ENCODE measurements at regions of chr22 and their contacts with region 1.

Region 1: GRCh38 chr22:31977141-31977841 is 33.0 kb downstream of the YWHAH start:
- DNase-seq: peak; percentile 55 to 83 (median 76)
- ATAC-seq: peak; percentile 95
- H3K4me3 ChIP-seq: no peak overlapping the region
- H3K4me3 Mint-ChIP-seq: no peak overlapping the region
- H3K27ac ChIP-seq: no peak overlapping the region
- H3K27ac Mint-ChIP-seq: no peak overlapping the region
- H3K4me1 ChIP-seq: no peaks in the 10 kb centered on the region
- H3K4me1 Mint-ChIP-seq: no peaks in the 10 kb centered on the region
- H3K27me3 ChIP-seq: no peaks in the 10 kb centered on the region
- H3K27me3 Mint-ChIP-seq: no peaks in the 10 kb centered on the region
- CTCF ChIP-seq: peak; percentile 62

Region 2: GRCh38 chr22:31935966-31936635 is 41.2 kb before region 1 on chr22:
- CTCF ChIA-PET with region 1: no interaction called
- POLR2A ChIA-PET with region 1: no interaction called
- intact Hi-C with region 1: no loop called
- DNase-seq: no peak
- ATAC-seq: no peak
- H3K4me3 ChIP-seq: no peak overlapping the region
- H3K4me3 Mint-ChIP-seq: no peak overlapping the region
- H3K27ac ChIP-seq: no peak overlapping the region
- H3K27ac Mint-ChIP-seq: no peak overlapping the region
- H3K4me1 ChIP-seq: no peaks in the 10 kb centered on the region
- H3K4me1 Mint-ChIP-seq: no peaks in the 10 kb centered on the region
- H3K27me3 ChIP-seq: no peaks in the 10 kb centered on the region
- H3K27me3 Mint-ChIP-seq: no peaks in the 10 kb centered on the region
- CTCF ChIP-seq: no peak

Region 3: GRCh38 chr22:32202539-32203180 is 225.4 kb after region 1 on chr22:
- CTCF ChIA-PET with region 1: no interaction called
- POLR2A ChIA-PET with region 1: no interaction called
- intact Hi-C with region 1: loop called in 1 of 2 experiments (anchors 2 kb)
- DNase-seq: peak in 3 of 9 experiments; percentile 29 to 45 (median 33)
- ATAC-seq: peak; percentile 35
- H3K4me3 ChIP-seq: peak overlapping the region; percentile 35 to 50
- H3K4me3 Mint-ChIP-seq: peak overlapping the region; percentile 66
- H3K27ac ChIP-seq: no peak overlapping the region
- H3K27ac Mint-ChIP-seq: no peak overlapping the region
- H3K4me1 ChIP-seq: peaks cover 26% of the 10 kb centered on the region
- H3K4me1 Mint-ChIP-seq: peaks cover 26% of the 10 kb centered on the region
- H3K27me3 ChIP-seq: peaks cover 2 to 5% of the 10 kb centered on the region in 2 experiments
- H3K27me3 Mint-ChIP-seq: peaks cover 19% of the 10 kb centered on the region
- CTCF ChIP-seq: no peak

Region 4: DNA sequence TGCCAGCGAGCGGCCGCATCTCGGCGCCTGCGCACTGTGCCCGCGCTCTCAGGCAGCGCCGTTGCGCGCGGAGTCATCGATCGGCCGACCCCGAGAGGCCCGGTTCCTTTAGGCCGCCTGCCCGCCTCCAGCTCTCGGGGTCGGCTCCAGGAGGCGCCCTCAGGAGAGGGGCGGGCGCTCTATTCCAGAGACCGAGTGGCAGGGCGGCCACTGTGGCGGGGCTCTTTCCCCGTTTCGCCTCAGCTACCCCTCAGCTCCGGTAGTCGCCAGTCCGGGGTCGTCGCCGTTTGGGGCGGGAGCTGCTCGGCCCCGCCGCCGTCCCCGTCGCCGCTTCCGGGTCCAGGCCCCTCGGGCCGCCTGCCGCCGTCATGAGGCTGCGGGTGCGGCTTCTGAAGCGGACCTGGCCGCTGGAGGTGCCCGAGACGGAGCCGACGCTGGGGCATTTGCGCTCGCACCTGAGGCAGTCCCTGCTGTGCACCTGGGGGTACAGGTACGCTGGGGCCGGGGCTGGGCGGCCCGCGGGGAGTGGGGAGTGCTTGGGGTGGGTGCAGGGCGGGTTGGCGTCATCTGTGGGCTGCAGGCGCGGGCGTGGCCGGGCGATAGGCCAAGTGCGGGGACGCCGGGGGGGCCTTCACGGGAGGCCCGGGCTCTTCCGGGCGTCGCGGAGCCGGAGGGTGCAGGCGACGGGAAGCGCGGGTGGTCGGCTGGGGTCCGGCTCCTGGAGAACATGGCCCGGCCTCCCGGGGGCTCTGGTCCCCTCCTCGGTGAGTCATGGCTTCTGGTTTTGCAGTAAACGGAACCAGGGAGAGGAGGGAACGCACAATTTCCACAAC is 497.6 kb after region 1 on chr22 and contains the start of gene FBXO7:
- CTCF ChIA-PET with region 1: no interaction called
- POLR2A ChIA-PET with region 1: no interaction called
- intact Hi-C with region 1: loop called in 1 of 2 experiments (anchors 1 kb)
- DNase-seq: peak; percentile 70 to 95 (median 86)
- ATAC-seq: peak; percentile 86
- H3K4me3 ChIP-seq: peak within 1 kb of the TSS; percentile 83 to 91
- H3K4me3 Mint-ChIP-seq: peak within 1 kb of the TSS; percentile 90
- H3K27ac ChIP-seq: peak within 1 kb of the TSS; percentile 90 to 92
- H3K27ac Mint-ChIP-seq: peak within 1 kb of the TSS; percentile 96
- H3K4me1 ChIP-seq: peaks cover 39% of the 10 kb centered on the region
- H3K4me1 Mint-ChIP-seq: peaks cover 24% of the 10 kb centered on the region
- H3K27me3 ChIP-seq: no peaks in the 10 kb centered on the region
- H3K27me3 Mint-ChIP-seq: no peaks in the 10 kb centered on the region
- CTCF ChIP-seq: peak; percentile 23
- total RNA-seq, gene FBXO7: 172 to 174 TPM

Region 5: DNA sequence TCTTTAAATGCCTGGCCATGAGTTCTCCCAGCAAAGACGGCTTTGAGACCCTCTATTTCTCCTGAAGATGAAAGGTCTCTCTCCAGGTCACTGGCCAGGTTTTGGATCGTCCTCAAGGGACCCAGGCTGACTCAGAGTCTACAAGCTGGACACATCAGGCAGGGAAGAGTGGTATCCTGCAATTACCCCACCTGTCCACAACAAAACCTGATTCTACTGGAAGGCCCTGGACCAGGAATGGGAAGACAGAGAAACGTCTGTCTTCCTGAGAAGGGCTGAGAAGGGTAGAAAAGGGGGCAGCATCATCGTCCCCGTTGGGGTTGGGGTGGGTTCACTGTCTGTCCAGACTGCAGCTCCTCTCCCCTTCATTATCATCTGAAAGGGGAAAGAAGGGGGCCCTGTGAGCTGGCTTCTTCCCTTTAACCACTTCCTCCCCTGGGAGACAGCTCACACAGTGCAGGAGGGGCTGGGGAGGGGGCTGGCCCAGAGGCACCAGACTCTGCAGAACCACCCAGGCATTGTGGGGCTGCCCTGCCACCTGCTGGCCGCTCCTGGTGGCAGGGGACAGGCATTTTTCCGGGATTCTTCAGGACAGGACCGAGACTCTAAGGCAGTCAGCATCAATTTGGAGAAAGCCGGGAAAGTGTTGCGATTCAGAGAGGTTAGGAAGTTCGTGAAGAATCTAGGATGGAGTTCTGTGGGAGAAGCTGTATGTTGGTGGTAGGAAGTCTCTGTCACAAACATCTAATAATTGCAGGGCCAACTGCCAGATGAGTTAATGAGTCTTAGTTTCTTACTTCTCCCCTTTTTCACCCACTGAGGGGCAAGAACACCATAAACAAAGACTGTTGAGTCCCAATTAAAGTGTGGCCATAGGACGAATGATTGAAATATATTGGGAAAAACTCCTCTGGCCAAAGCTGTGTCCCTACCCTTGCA is 1023.3 kb after region 1 on chr22:
- CTCF ChIA-PET with region 1: no interaction called
- POLR2A ChIA-PET with region 1: no interaction called
- intact Hi-C with region 1: loop called in 1 of 2 experiments (anchors 2 kb)
- DNase-seq: peak in 6 of 9 experiments; percentile 4 to 51 (median 25)
- ATAC-seq: no peak
- H3K4me3 ChIP-seq: no peak overlapping the region
- H3K4me3 Mint-ChIP-seq: no peak overlapping the region
- H3K27ac ChIP-seq: no peak overlapping the region
- H3K27ac Mint-ChIP-seq: no peak overlapping the region
- H3K4me1 ChIP-seq: no peaks in the 10 kb centered on the region
- H3K4me1 Mint-ChIP-seq: peaks cover 2% of the 10 kb centered on the region
- H3K27me3 ChIP-seq: no peaks in the 10 kb centered on the region
- H3K27me3 Mint-ChIP-seq: peaks cover 6% of the 10 kb centered on the region
- CTCF ChIP-seq: peak; percentile 62

Measured in CD8-positive, alpha-beta T cell (primary cell).